Calu3 (cell line): ENCODE measurements at regions of chr5 and their contacts with region 1.

Region 1: DNA sequence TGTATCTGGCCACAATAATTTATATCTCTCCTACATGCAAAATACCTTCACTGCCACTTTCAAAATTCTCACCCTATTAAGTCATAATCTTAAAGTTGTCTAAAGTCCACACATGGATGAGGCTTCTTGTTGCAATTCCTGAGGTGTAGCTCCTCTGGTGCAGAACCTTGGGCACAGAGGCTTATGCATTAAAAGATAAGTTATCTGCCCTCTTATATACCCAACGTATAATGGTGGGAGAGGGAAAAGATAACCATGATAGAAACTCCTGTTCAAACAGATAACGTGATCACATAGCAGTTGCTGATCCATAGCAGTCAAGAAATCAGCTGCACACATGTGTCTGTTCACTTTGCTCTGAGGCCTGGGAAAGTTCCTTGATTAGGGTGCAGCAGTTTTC is 1767.0 kb downstream of the MAT2B start:
- DNase-seq: no peak
- H3K4me3 Mint-ChIP-seq: no peak overlapping the region
- H3K27ac Mint-ChIP-seq: no peak overlapping the region
- H3K4me1 Mint-ChIP-seq: no peaks in the 10 kb centered on the region
- H3K27me3 Mint-ChIP-seq: no peaks in the 10 kb centered on the region
- CTCF ChIP-seq: no peak

Region 2: DNA sequence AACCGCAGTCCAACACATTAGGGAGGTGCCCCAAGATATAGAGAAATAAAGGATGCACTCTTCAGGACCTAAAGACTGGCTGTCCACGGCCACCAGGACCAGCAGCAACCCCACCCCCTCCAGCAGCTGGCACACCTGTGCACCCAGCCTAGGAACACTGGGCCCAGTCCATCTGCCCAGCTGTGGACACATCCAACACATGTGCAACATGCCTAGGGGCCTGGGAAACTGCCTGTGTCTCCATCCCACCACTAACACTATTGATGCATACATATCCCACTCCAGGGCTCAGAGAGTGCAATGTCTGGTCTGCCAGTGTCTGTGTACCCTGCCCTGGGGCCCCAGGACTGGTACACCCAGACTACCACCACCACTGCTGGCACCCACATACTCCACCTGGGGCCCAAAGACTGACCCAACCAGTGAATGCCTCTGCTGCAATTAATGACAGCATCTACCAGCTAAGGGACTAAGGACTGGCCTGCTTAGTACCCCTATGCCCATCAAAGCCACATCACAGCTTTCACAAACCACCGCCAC is 14.3 kb after region 1 on chr5:
- CTCF ChIA-PET with region 1: interaction called, 11 read pairs
- intact Hi-C with region 1: no loop called
- DNase-seq: no peak
- H3K4me3 Mint-ChIP-seq: no peak overlapping the region
- H3K27ac Mint-ChIP-seq: no peak overlapping the region
- H3K4me1 Mint-ChIP-seq: no peaks in the 10 kb centered on the region
- H3K27me3 Mint-ChIP-seq: no peaks in the 10 kb centered on the region
- CTCF ChIP-seq: no peak